ENCODE measurements at regions of chr17 and their contacts with region 1.

Region 1: DNA sequence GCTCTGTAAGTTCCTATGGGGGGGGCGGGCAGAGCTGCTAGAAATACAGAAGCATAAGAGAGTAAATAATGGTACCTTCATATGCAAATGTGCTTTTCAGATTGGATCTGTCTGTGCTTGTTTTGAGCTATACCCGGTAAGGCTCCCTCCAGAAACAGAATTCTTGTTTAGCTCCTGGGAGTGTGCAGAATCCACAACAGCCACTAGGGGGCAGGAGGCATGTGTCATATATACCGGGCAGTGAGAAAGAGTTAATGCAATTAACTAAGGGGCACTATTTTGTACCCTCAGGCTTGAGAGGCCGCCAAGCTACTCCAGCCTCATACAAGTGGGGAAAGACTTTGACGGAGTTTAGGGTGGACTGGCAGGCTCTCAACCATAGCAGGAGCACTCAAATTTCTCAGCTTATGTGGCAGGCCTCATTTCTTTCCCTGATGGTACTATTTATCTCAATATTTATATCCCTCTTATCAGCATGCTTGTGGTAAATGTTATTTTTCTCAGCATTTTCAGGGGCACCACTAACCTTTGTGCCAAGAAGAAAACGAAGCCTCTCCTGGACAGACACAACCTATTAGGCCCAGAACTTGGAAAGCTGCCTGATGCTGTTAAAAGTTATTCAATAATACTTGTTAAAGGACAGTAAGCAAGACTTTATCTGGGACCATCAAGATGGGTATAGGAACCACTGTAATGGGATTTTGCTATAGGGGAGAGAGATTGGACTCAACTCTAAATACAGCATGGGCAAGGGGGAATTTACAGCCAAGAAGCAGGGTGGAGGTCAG is 10.7 kb upstream of the CENPV start:
- DNase-seq: peak; percentile 79
- H3K4me3 Mint-ChIP-seq: no peak overlapping the region
- H3K27ac Mint-ChIP-seq: no peak overlapping the region
- H3K4me1 Mint-ChIP-seq: peaks cover 7% of the 10 kb centered on the region
- H3K27me3 Mint-ChIP-seq: peaks cover 5% of the 10 kb centered on the region

Region 2: GRCh38 chr17:16353317-16354174 is 10.4 kb before region 1 on chr17 and contains the start of gene CENPV:
- CTCF ChIA-PET with region 1: interaction called, 55 read pairs
- POLR2A ChIA-PET with region 1: interaction called, 6 read pairs
- DNase-seq: peak; percentile 50
- H3K4me3 Mint-ChIP-seq: peak within 1 kb of the TSS; percentile 82
- H3K27ac Mint-ChIP-seq: no peak within 1 kb of the TSS
- H3K4me1 Mint-ChIP-seq: peaks cover 19% of the 10 kb centered on the region
- H3K27me3 Mint-ChIP-seq: peaks cover 28% of the 10 kb centered on the region
- total RNA-seq, gene CENPV: 9.4 to 12.3 TPM

Region 3: GRCh38 chr17:16415031-16415924 is 51.3 kb after region 1 on chr17 and contains the start of gene TRPV2:
- CTCF ChIA-PET with region 1: interaction called, 64 read pairs
- POLR2A ChIA-PET with region 1: interaction called, 15 read pairs
- DNase-seq: peak; percentile 67
- H3K4me3 Mint-ChIP-seq: peak within 1 kb of the TSS; percentile 98
- H3K27ac Mint-ChIP-seq: peak within 1 kb of the TSS; percentile 100
- H3K4me1 Mint-ChIP-seq: peaks cover 54% of the 10 kb centered on the region
- H3K27me3 Mint-ChIP-seq: no peaks in the 10 kb centered on the region
- total RNA-seq, gene TRPV2: 131 to 142 TPM

Region 4: DNA sequence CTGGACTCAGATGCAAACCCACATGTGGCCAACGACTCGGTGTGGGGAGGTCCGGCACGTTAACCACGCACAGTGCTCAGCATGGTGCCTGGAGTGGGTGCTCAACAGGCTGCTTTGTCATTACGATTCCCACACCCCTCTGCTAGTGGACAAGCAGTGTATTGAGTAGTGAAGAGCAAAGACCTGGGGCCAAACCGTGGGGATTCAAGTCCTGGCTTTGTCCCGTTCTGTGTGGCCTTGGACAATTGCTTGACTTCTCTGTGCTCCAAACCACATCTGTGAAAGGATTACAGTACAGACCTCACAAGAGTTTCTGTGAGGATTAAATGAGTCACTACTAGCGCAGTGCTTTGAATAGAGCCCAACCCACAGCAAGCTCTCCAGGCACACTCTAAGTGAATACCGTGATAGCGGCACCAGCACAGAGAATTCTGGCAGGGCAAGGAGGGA is 85.2 kb after region 1 on chr17:
- CTCF ChIA-PET with region 1: interaction called, 11 read pairs
- POLR2A ChIA-PET with region 1: no interaction called
- DNase-seq: no peak
- H3K4me3 Mint-ChIP-seq: no peak overlapping the region
- H3K27ac Mint-ChIP-seq: no peak overlapping the region
- H3K4me1 Mint-ChIP-seq: peaks cover 21% of the 10 kb centered on the region
- H3K27me3 Mint-ChIP-seq: no peaks in the 10 kb centered on the region

Region 5: DNA sequence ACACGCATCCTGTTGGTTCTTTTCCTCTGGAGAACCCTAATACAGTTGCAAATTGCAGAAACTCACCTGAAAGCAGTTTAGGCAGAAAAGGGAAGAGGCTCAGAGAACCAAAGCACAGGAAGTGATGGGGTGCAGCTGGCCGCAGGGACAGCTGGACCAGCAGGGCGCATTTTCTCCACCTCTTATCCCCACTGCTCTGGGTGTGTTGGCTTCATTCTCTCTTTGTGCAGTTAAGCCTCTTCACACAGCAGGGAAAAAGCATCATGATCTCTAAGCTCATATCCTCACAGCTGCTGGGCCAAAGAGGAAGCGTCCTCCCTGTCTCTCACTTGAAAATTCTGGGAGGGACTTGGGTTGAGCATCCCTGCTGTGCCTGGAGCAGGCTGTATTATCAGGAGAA is 148.1 kb after region 1 on chr17:
- CTCF ChIA-PET with region 1: no interaction called
- POLR2A ChIA-PET with region 1: no interaction called
- DNase-seq: no peak
- H3K4me3 Mint-ChIP-seq: no peak overlapping the region
- H3K27ac Mint-ChIP-seq: no peak overlapping the region
- H3K4me1 Mint-ChIP-seq: peaks cover 10% of the 10 kb centered on the region
- H3K27me3 Mint-ChIP-seq: peaks cover 24% of the 10 kb centered on the region